ENCODE measurements at regions of chr2 and their contacts with region 1.

Region 1: DNA sequence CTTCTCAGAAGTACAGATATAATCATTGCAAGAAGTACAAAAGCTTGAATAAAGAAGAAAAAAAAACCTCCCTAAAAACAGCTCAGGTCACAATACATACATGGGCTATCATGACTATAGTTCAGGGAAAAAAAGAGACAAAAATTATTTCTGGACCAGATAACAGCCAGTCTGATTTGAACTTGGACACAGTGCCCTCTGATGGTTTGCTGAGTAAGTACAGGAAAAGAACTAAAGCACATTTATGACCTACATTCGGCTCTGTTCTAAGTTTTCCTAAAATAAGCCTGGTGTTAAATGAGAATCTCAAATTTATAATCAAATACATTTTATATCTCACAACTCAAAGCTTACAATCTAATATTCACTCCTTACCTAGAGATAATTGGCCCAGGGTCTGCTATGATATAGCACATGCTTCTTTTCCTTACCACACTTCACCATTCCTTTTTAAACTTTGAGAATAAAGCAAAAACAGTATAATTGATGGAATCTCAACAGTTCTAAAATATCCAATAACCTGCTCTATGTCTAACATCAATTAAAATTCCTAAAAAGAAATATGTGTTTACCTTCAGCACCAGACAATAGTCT is 81.1 kb downstream of the RAPH1 start:
- DNase-seq: peak; percentile 61
- ATAC-seq: peak; percentile 89
- H3K4me3 ChIP-seq: no peak overlapping the region
- H3K27ac ChIP-seq: no peak overlapping the region
- H3K4me1 ChIP-seq: peaks cover 7% of the 10 kb centered on the region; the same call in 1 of the 2 replicates
- H3K27me3 ChIP-seq: no peaks in the 10 kb centered on the region
- CTCF ChIP-seq: peak; percentile 78
- EP300 ChIP-seq: no peak
- POLR2A ChIP-seq: no peak
- RAD21 ChIP-seq: 0 out of 2 replicates have a peak, but pooled peaks have one; percentile 47

Region 2: DNA sequence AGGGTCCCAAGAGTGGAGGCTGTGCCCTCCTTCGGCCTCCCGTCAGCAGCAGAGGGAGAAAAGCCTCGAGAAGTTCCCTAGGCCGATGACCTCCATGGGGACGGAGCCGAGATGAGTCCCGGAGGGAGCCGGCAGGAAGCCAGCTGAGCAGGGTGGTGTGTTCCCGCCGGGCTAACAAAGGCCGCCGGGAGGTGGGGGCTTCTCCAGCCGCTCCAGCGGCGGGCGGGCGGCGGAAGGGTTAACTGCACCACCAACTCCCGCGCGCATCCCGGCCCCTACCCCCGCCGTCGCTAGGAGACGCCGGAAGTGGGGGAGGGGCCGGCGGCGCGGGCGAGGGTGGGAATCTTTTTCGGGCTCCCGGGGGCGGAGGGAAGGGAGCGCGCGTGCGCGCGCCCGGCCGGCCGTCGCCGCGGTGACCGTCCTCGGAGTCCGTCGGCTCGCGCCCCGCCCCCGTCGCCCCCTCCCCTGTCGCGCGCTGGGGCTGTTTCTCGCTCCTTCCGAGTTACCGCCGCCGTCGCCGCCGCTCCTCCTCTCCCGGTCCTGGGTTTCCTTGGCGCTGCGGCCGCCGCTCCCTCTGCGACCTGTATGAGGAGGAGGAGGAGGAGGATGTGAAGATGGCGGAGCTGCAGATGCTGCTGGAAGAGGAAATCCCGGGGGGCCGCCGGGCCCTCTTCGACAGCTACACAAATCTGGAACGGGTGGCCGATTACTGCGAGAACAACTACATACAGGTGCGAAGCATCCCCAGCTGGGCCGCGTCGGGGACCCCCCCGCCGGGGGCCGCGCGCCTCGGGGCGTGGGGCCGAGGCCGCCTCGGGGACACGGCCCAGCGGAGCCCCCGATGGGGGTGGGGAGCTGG is 125.8 kb before region 1 on chr2 and contains the start of gene ABI2:
- CTCF ChIA-PET with region 1: no interaction called
- POLR2A ChIA-PET with region 1: no interaction called
- in situ Hi-C with region 1: no loop called
- intact Hi-C with region 1: loop called (anchors 5 kb)
- DNase-seq: peak; percentile 84
- ATAC-seq: peak; percentile 92
- H3K4me3 ChIP-seq: peak within 1 kb of the TSS; percentile 97 to 100 (median 97)
- H3K27ac ChIP-seq: peak within 1 kb of the TSS; percentile 83
- H3K4me1 ChIP-seq: peaks cover 34% of the 10 kb centered on the region
- H3K27me3 ChIP-seq: peaks cover 0 to 2% of the 10 kb centered on the region in 2 experiments; a peak in 1 of 5 replicates
- CTCF ChIP-seq: no peak
- EP300 ChIP-seq: peak in 1 of 2 experiments; percentile 72; a peak in 2 of 4 replicates
- POLR2A ChIP-seq: peak; percentile 25 to 80; a peak in 3 of 4 replicates
- RAD21 ChIP-seq: peak; percentile 60
- total RNA-seq, gene ABI2: 25.6 and 28.4 TPM in 2 replicates

Region 3: GRCh38 chr2:203427061-203427460 is 26.9 kb before region 1 on chr2:
- CTCF ChIA-PET with region 1: no interaction called
- POLR2A ChIA-PET with region 1: no interaction called
- in situ Hi-C with region 1: no loop called
- intact Hi-C with region 1: no loop called
- DNase-seq: no peak
- ATAC-seq: no peak
- H3K4me3 ChIP-seq: no peak overlapping the region
- H3K27ac ChIP-seq: no peak overlapping the region
- H3K4me1 ChIP-seq: no peaks in the 10 kb centered on the region
- H3K27me3 ChIP-seq: no peaks in the 10 kb centered on the region
- CTCF ChIP-seq: no peak
- EP300 ChIP-seq: no peak
- POLR2A ChIP-seq: no peak
- RAD21 ChIP-seq: no peak

Measured in HepG2 (cell line).